ENCODE measurements at regions of chr21 and their contacts with region 1.

Region 1: GRCh38 chr21:29372063-29372802 is 73.5 kb downstream of the BACH1 start:
- DNase-seq: peak; percentile 50
- H3K4me3 ChIP-seq: no peak overlapping the region; a peak in 1 of 4 replicates
- H3K27ac ChIP-seq: no peak overlapping the region
- H3K4me1 ChIP-seq: no peaks in the 10 kb centered on the region
- H3K27me3 ChIP-seq: no peaks in the 10 kb centered on the region
- CTCF ChIP-seq: peak; percentile 80
- EP300 ChIP-seq: no peak
- RAD21 ChIP-seq: peak; percentile 93

Region 2: GRCh38 chr21:29091032-29091431 is 281.2 kb before region 1 on chr21:
- CTCF ChIA-PET with region 1: interaction called, 40 read pairs
- POLR2A ChIA-PET with region 1: no interaction called
- DNase-seq: no peak
- H3K4me3 ChIP-seq: no peak overlapping the region
- H3K27ac ChIP-seq: peak overlapping the region in 1 of 2 experiments; percentile 33; a peak in 2 of 4 replicates
- H3K4me1 ChIP-seq: peaks cover 0 to 21% of the 10 kb centered on the region in 2 experiments; a peak in 1 of 4 replicates
- H3K27me3 ChIP-seq: no peaks in the 10 kb centered on the region
- CTCF ChIP-seq: no peak
- EP300 ChIP-seq: peak in 1 of 2 experiments; percentile 37; a peak in 1 of 4 replicates
- RAD21 ChIP-seq: no peak

Region 3: GRCh38 chr21:29164325-29164942 is 207.8 kb before region 1 on chr21:
- CTCF ChIA-PET with region 1: interaction called, 21 read pairs
- POLR2A ChIA-PET with region 1: no interaction called
- DNase-seq: peak; percentile 28
- H3K4me3 ChIP-seq: peak overlapping the region in 1 of 2 experiments; percentile 39; a peak in 1 of 4 replicates
- H3K27ac ChIP-seq: peak overlapping the region in 1 of 2 experiments; percentile 44; a peak in 3 of 4 replicates
- H3K4me1 ChIP-seq: peaks cover 0 to 12% of the 10 kb centered on the region in 2 experiments; a peak in 2 of 4 replicates
- H3K27me3 ChIP-seq: no peaks in the 10 kb centered on the region
- CTCF ChIP-seq: peak; percentile 90
- EP300 ChIP-seq: no peak
- RAD21 ChIP-seq: peak; percentile 86

Region 4: DNA sequence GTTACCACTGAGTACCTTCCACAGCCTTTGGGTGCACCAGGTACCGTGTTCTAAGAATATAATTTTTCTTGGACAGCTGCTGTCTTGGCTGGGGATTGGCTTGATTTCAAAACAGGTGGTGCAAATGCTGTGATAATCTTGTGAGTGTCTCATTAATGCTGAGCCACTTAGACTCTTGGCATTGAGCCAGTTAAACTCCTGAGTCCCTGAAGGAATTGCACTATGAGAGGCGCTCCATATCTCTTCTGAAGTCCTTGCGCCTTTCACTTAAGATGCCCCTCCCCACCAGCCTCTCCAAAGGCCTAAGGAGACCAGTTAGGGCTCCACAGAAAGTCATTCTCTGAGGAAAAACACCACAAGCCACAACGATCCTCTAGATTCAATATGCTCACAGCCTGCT is 22.5 kb before region 1 on chr21:
- CTCF ChIA-PET with region 1: interaction called, 10 read pairs
- POLR2A ChIA-PET with region 1: no interaction called
- DNase-seq: no peak
- H3K4me3 ChIP-seq: no peak overlapping the region
- H3K27ac ChIP-seq: no peak overlapping the region
- H3K4me1 ChIP-seq: peaks cover 5 to 17% of the 10 kb centered on the region in 2 experiments; a peak in 3 of 4 replicates
- H3K27me3 ChIP-seq: no peaks in the 10 kb centered on the region
- CTCF ChIP-seq: no peak
- EP300 ChIP-seq: no peak
- RAD21 ChIP-seq: no peak

Region 5: DNA sequence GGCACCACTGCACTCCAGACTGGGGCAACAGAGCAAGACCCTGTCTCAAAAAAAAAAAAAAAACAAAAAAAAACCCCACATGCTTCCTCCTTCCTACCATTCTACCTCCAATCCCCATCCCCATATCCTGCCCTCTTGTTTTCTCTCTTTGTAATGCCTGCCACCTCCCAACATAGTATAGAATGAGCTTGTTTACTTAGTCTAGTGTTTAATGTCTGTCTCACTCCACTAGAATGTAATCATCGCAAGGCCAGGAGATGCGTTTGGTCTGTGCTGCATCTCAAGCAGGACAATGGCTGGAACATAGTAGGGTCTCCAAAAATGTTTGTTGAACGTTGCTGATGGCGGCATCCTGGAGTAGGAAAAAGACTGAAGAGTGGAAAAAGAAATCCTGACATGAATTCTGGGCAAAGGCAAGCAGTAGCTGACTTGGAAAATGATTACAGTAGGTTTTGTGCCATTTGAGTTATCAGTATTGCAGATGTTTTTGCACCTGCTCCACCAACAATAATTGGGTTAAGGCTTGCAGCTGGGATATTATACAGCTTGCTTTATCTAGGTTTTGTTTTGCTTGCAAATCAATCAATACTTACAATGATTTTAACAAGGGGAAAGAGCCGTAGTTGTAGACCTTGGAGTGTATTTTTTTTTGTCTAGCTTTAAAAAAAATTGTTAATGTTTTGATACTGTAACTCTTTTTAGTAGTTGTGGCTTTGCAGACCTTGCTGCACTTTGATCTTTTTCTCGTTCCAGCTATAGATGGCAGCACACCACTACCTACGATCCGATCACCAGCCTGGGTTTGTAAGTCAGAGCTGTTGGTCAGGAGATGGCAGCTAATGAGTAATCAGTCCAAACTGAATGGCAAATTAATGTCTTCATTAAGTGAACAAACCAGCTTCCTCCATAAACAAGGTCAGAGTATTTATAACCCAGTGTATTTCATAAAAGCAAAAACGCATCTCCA is 11.2 kb before region 1 on chr21:
- CTCF ChIA-PET with region 1: interaction called, 19 read pairs
- POLR2A ChIA-PET with region 1: no interaction called
- DNase-seq: no peak
- H3K4me3 ChIP-seq: no peak overlapping the region
- H3K27ac ChIP-seq: no peak overlapping the region
- H3K4me1 ChIP-seq: no peaks in the 10 kb centered on the region; a peak in 1 of 4 replicates
- H3K27me3 ChIP-seq: no peaks in the 10 kb centered on the region
- CTCF ChIP-seq: no peak
- EP300 ChIP-seq: no peak
- RAD21 ChIP-seq: peak; percentile 47

Measured in SK-N-SH (cell line).